K562 (cell line): ENCODE measurements at regions of chr14 and their contacts with region 1.

Region 1: DNA sequence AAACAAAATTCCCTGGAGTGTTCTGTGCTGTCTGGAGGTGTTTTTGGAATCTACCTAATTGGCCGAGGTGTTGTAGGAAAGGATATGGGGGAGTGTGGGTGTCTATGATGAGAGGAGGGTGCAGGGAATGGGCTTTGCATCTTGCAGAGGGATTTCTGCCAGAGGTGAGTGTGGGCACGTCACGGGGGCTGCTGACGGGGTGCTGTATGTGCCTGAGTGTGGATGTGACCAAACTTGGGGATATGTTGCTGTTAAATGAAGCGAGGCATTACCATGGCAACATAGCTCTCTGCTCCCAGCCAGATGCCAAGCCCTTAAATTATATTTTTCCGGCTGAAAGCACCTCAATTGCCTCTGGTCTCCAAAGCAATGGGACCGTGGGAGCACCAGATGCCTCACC is 44.3 kb upstream of the SPTLC2 start:
- DNase-seq: no peak
- ATAC-seq: no peak
- H3K4me3 ChIP-seq: no peak overlapping the region
- H3K27ac ChIP-seq: no peak overlapping the region
- H3K4me1 ChIP-seq: no peaks in the 10 kb centered on the region; a peak in 2 of 5 replicates
- H3K27me3 ChIP-seq: no peaks in the 10 kb centered on the region
- CTCF ChIP-seq: no peak
- EP300 ChIP-seq: no peak
- POLR2A ChIP-seq: no peak
- RAD21 ChIP-seq: no peak

Region 2: GRCh38 chr14:78598041-78598920 is 937.5 kb after region 1 on chr14:
- CTCF ChIA-PET with region 1: no interaction called
- POLR2A ChIA-PET with region 1: no interaction called
- in situ Hi-C with region 1: loop called (anchors 25 kb)
- intact Hi-C with region 1: no loop called
- DNase-seq: peak; percentile 55 to 73 (median 65)
- ATAC-seq: peak; percentile 99
- H3K4me3 ChIP-seq: no peak overlapping the region
- H3K27ac ChIP-seq: no peak overlapping the region
- H3K4me1 ChIP-seq: no peaks in the 10 kb centered on the region
- H3K27me3 ChIP-seq: no peaks in the 10 kb centered on the region
- CTCF ChIP-seq: peak; percentile 80 to 83 (median 81)
- EP300 ChIP-seq: no peak
- POLR2A ChIP-seq: no peak
- RAD21 ChIP-seq: peak; percentile 57 to 68